ENCODE measurements at regions of chr2 and their contacts with region 1.

Region 1: GRCh38 chr2:17646081-17646554 is 105.6 kb downstream of the VSNL1 start:
- DNase-seq: peak; percentile 84
- H3K4me3 ChIP-seq: no peak overlapping the region
- H3K27ac ChIP-seq: peak overlapping the region; percentile 28
- H3K4me1 ChIP-seq: peaks cover 37% of the 10 kb centered on the region
- H3K27me3 ChIP-seq: no peaks in the 10 kb centered on the region
- CTCF ChIP-seq: peak; percentile 77 to 90

Region 2: DNA sequence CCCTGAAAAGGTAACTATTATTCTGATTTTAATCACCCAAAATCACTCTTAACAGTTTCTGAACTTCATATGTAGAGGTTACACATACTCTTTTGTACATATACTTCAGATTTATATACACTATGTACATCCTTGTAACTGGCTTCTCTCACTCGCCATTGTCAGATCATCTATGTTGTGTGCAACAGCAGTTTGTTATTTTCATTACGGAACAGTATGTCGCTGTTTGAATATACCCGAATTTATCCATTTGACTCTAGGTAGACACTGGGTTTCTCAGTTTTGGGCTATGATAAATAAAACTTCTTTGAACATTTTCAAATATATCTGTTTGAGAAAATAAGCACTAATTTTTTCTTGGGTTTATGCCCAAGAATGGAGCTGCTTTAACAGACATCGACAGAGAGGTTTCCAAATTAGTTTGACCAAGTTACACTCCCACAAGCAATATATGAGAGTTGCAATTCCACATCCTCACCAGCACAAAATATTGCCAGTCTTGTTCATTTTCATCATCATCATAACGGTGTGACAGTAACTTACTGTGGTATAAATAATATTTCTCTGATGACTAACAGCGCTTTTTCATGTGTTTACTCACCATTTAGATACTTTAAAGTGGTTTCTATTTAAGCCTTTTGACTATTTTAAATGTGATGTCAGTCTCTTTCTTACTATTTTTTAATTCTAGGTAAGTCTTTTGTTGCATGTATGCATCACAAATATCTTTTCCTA is 26.6 kb after region 1 on chr2:
- CTCF ChIA-PET with region 1: interaction called, 16 read pairs
- dilution Hi-C with region 1: no loop called
- in situ Hi-C with region 1: no loop called
- intact Hi-C with region 1: no loop called
- DNase-seq: peak; percentile 80
- H3K4me3 ChIP-seq: no peak overlapping the region
- H3K27ac ChIP-seq: peak overlapping the region; percentile 60
- H3K4me1 ChIP-seq: no peaks in the 10 kb centered on the region
- H3K27me3 ChIP-seq: no peaks in the 10 kb centered on the region
- CTCF ChIP-seq: peak in 1 of 2 donors; percentile 15